Heart left ventricle (tissue), 16 donors: ENCODE measurements at regions of chr2 and their contacts with region 1.

Region 1: DNA sequence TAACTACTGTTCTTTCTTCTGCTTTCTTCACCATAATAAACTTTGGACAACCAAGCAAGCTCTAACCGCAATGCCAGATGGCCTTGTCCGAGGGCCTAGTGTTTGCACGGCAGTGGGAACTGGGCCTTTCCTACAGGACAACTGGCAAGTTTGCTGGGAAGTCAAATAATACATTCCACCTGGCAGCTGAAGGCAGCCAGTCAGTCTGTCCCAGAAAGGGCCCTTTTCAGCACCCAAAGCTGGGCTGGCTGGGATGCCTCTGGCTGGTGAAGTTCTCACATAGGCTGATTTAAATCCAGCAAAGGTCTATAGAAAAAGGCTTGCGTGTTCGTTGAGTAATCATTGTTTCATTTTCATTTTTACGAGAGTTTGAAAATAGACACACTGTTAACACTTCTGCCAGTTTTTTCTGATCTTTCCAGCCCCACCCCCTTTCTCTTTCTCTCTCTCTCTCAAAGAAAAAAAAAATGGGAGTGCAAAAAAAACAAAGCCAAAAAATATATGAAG is 110.0 kb upstream of the EPAS1 start:
- DNase-seq: peak in 3 of 5 donors; percentile 46 to 59 (median 55)
- ATAC-seq: peak; percentile 30 to 69 (median 58)
- H3K4me3 ChIP-seq: peak overlapping the region in 9 of 12 donors; percentile 15 to 45 (median 37)
- H3K27ac ChIP-seq: peak overlapping the region; percentile 13 to 94 (median 78)
- H3K4me1 ChIP-seq: peaks cover 0 to 25% (median 12%) of the 10 kb centered on the region in 12 donors
- H3K27me3 ChIP-seq: no peaks in the 10 kb centered on the region
- CTCF ChIP-seq: no peak
- POLR2A ChIP-seq: no peak

Region 2: DNA sequence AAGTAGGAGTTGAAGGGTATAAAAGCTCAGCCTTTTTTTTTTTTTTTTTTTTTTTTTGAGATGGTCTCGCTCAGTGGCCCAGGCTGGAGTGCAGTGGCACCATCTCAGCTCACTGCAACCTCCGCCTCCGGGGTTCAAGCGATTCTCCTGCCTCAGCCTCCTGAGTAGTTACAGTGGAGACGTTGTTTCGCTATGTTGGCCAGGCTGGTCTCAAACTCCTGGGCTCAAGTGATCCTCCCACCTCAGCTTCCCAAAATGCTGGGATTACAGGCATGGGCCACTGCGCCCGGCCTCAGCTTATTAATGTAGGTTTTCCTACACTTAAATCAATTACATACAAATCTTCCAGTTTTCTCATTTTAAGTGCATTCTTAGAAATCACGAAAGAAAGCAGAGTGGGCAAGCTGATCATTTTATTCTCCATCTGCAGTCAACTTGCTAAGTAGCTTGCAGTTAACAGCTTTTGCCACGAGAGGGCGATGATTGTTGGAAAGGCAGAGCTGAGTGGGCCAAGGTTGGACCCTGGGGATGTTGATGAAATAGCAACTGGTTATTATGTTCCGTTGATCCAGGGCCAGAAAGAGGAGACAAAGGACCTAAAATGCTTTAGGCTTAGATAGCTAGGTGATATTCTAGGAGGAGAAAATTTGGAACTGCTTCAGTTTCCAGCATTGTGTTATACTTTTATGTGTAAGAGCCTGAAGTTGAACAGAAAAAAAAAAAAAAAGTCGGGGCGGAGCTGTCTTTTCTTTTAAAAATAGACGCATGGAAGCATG is 124.3 kb before region 1 on chr2:
- intact Hi-C with region 1: loop called in 2 of 10 experiments (anchors 5 to 10 kb)
- DNase-seq: peak in 4 of 5 donors; percentile 84 to 91 (median 88)
- ATAC-seq: peak; percentile 63 to 84 (median 80)
- H3K4me3 ChIP-seq: peak overlapping the region in 2 of 12 donors; percentile 6 to 19
- H3K27ac ChIP-seq: peak overlapping the region in 11 of 12 donors; percentile 33 to 82 (median 69)
- H3K4me1 ChIP-seq: peaks cover 0 to 55% (median 23%) of the 10 kb centered on the region in 12 donors
- H3K27me3 ChIP-seq: no peaks in the 10 kb centered on the region
- CTCF ChIP-seq: peak; percentile 82 to 96 (median 88)
- POLR2A ChIP-seq: no peak

Region 3: GRCh38 chr2:46122318-46122976 is 64.7 kb before region 1 on chr2:
- intact Hi-C with region 1: loop called in 1 of 10 experiments (anchors 10 kb)
- DNase-seq: no peak
- ATAC-seq: no peak
- H3K4me3 ChIP-seq: no peak overlapping the region
- H3K27ac ChIP-seq: peak overlapping the region in 3 of 12 donors; percentile 22 to 90 (median 72)
- H3K4me1 ChIP-seq: peaks cover 4 to 60% (median 46%) of the 10 kb centered on the region in 12 donors
- H3K27me3 ChIP-seq: no peaks in the 10 kb centered on the region
- CTCF ChIP-seq: no peak
- POLR2A ChIP-seq: no peak

Region 4: DNA sequence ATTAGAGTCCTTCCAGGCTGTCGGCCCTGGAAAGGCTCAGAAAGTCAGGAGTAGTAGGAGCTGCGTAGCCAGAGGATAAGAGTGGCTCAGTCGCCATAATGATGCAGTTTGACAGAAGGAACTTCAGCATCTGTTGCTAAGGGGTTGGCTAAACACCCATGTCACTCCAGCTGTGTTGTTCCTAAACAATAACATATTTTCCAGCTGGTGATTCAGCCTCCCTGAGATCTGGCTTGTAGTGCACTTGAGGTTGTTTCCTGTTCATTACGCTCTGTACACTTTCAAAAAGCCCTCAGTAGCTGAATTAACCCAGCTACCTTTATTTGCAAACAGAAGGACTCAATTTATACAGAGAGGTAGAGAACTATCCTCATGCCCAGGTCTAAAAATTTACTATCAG is 70.3 kb after region 1 on chr2:
- intact Hi-C with region 1: loop called in 1 of 10 experiments (anchors 5 kb)
- DNase-seq: peak in 1 of 5 donors; percentile 50
- ATAC-seq: peak; percentile 34 to 71 (median 60)
- H3K4me3 ChIP-seq: no peak overlapping the region
- H3K27ac ChIP-seq: peak overlapping the region; percentile 12 to 78 (median 59)
- H3K4me1 ChIP-seq: peaks cover 3 to 65% (median 46%) of the 10 kb centered on the region in 12 donors
- H3K27me3 ChIP-seq: no peaks in the 10 kb centered on the region
- CTCF ChIP-seq: no peak
- POLR2A ChIP-seq: no peak

Region 5: GRCh38 chr2:46269544-46270273 is 82.5 kb after region 1 on chr2:
- intact Hi-C with region 1: loop called in 1 of 10 experiments (anchors 5 kb)
- DNase-seq: peak in 3 of 5 donors; percentile 50 to 75 (median 75)
- ATAC-seq: peak in 3 of 4 donors; percentile 61 to 77 (median 70)
- H3K4me3 ChIP-seq: no peak overlapping the region
- H3K27ac ChIP-seq: peak overlapping the region in 11 of 12 donors; percentile 5 to 74 (median 54)
- H3K4me1 ChIP-seq: peaks cover 0 to 78% (median 55%) of the 10 kb centered on the region in 12 donors
- H3K27me3 ChIP-seq: no peaks in the 10 kb centered on the region
- CTCF ChIP-seq: no peak
- POLR2A ChIP-seq: no peak

Region 6: GRCh38 chr2:46284806-46285205 is 97.6 kb after region 1 on chr2:
- intact Hi-C with region 1: loop called in 2 of 10 experiments (anchors 5 to 10 kb)
- DNase-seq: no peak
- ATAC-seq: peak in 1 of 4 donors; percentile 39
- H3K4me3 ChIP-seq: no peak overlapping the region
- H3K27ac ChIP-seq: no peak overlapping the region
- H3K4me1 ChIP-seq: peaks cover 0 to 9% (median 0%) of the 10 kb centered on the region in 12 donors
- H3K27me3 ChIP-seq: no peaks in the 10 kb centered on the region
- CTCF ChIP-seq: no peak
- POLR2A ChIP-seq: no peak